ENCODE measurements at regions of chr12 and their contacts with region 1.

Region 1: GRCh38 chr12:56688129-56688845 is at the start of gene PTGES3:
- DNase-seq: peak; percentile 92
- ATAC-seq: peak; percentile 75
- H3K4me3 ChIP-seq: peak within 1 kb of the TSS; percentile 90
- H3K27ac ChIP-seq: peak within 1 kb of the TSS; percentile 99
- H3K4me1 ChIP-seq: no peaks in the 10 kb centered on the region
- H3K27me3 ChIP-seq: no peaks in the 10 kb centered on the region
- CTCF ChIP-seq: no peak
- EP300 ChIP-seq: peak in 1 of 2 experiments; percentile 47; a peak in 2 of 4 replicates
- POLR2A ChIP-seq: peak; percentile 93
- RAD21 ChIP-seq: no peak
- polyA plus RNA-seq, gene PTGES3: 117 to 186 TPM

Region 2: GRCh38 chr12:56630160-56630632 is 58.1 kb before region 1 on chr12 and contains the start of gene BAZ2A:
- CTCF ChIA-PET with region 1: interaction called, 58 read pairs
- POLR2A ChIA-PET with region 1: interaction called, 155 read pairs
- RAD21 ChIA-PET with region 1: interaction called, 176 read pairs
- SMC1A ChIA-PET with region 1: interaction called, 28 read pairs
- in situ Hi-C with region 1: no loop called
- intact Hi-C with region 1: loop called (anchors 2 kb)
- DNase-seq: no peak
- ATAC-seq: peak; percentile 79
- H3K4me3 ChIP-seq: peak within 1 kb of the TSS; percentile 100
- H3K27ac ChIP-seq: peak within 1 kb of the TSS; percentile 90
- H3K4me1 ChIP-seq: peaks cover 47% of the 10 kb centered on the region
- H3K27me3 ChIP-seq: no peaks in the 10 kb centered on the region
- CTCF ChIP-seq: no peak
- EP300 ChIP-seq: peak in 1 of 2 experiments; percentile 40; a peak in 2 of 4 replicates
- POLR2A ChIP-seq: peak; percentile 74
- RAD21 ChIP-seq: no peak
- polyA plus RNA-seq, gene BAZ2A: 4.8 to 14.6 TPM

Region 3: DNA sequence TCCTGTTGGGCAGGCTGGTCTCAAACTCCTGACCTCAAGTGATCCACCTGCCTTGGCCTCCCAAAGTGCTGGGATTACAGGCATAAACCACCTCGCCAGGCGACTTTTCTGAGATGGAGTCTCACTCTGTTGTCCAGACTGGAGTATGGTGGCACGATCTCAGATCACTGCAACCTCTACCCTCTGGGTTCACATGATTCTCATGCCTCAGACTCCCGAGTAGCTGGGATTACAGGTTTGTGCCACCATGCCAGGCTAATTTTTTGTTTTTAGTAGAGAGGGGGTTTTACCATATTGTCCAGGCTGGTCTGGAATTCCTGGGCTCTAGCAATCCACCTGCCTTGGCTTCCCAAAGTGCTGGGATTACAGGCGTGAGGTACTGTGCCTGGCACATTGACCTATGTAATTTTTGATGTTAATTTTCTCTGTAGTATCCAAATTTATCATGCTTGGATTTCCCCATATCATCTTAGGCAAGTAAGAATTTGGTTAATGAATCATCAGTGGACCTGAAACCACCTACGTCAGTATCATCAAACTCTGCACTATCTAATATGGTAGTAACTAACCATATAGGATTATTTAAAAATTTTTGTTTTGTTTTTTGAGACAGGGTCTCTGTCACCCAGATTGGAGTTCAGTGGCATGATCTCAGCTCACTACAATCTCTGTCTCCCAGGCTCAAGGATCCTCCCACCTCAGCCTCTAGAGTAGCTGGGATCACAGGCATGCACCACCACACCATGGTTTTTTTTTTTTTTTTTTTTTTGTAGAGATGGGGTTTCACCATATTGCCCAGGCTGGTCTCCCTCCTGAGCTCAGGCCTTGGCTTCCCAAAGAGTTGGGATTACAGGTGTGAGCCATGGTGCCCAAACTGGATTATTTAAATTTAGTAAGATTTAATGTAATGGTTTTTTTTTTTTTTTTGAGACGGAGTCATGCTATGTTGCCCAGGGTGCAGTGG is 30.6 kb before region 1 on chr12:
- CTCF ChIA-PET with region 1: interaction called, 6 read pairs
- POLR2A ChIA-PET with region 1: interaction called, 51 read pairs
- RAD21 ChIA-PET with region 1: interaction called, 21 read pairs
- SMC1A ChIA-PET with region 1: interaction called, 22 read pairs
- in situ Hi-C with region 1: no loop called
- intact Hi-C with region 1: no loop called
- DNase-seq: no peak
- ATAC-seq: peak; percentile 78
- H3K4me3 ChIP-seq: no peak overlapping the region
- H3K27ac ChIP-seq: peak overlapping the region; percentile 69
- H3K4me1 ChIP-seq: peaks cover 15% of the 10 kb centered on the region
- H3K27me3 ChIP-seq: no peaks in the 10 kb centered on the region
- CTCF ChIP-seq: no peak
- EP300 ChIP-seq: no peak
- POLR2A ChIP-seq: no peak
- RAD21 ChIP-seq: no peak

Region 4: DNA sequence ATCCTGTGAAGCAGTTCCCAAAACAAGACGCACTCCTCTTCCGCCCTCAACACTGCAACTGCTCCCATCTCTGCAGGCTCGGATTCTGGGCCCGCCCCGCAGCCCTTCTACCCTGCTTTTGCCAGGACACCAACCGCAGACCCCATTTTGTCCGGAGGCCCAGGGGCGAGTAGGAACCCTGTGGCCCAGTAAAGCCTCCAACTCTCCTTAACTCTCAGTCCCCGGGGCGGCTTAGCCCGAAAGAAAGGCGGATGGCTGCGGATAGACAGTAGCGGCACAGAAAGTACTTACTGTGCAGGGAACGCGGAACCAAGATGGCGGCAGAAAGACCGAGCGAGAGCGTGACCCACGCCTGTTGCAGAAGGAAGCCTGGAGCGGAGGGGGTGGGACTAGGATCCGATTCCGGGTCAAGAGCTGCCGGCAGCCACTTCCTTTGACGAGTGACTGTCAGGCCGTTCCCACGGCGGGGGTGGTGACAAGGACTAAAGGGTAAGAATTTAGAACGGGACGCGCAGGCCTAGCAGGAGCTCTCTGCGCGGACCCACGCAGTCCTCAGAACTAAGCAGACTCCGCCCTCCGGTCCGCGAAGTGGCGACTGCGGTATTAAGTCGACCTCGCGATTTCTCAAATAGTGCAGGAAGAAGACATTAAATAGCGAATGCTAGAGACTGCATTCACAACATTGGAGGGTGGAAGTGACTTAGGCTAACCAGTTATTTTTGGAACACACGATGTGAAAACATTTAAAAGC is 36.9 kb after region 1 on chr12 and contains the start of gene NACA:
- CTCF ChIA-PET with region 1: interaction called, 3 read pairs
- POLR2A ChIA-PET with region 1: interaction called, 26 read pairs
- RAD21 ChIA-PET with region 1: interaction called, 19 read pairs
- SMC1A ChIA-PET with region 1: interaction called, 11 read pairs
- in situ Hi-C with region 1: no loop called
- intact Hi-C with region 1: loop called (anchors 1 kb)
- DNase-seq: peak; percentile 91
- ATAC-seq: peak; percentile 95
- H3K4me3 ChIP-seq: peak within 1 kb of the TSS; percentile 97
- H3K27ac ChIP-seq: peak within 1 kb of the TSS; percentile 93
- H3K4me1 ChIP-seq: peaks cover 28% of the 10 kb centered on the region
- H3K27me3 ChIP-seq: no peaks in the 10 kb centered on the region
- CTCF ChIP-seq: no peak
- EP300 ChIP-seq: no peak
- POLR2A ChIP-seq: peak; percentile 100
- RAD21 ChIP-seq: no peak
- polyA plus RNA-seq, gene NACA: 2,263 to 2,782 TPM

Region 5: DNA sequence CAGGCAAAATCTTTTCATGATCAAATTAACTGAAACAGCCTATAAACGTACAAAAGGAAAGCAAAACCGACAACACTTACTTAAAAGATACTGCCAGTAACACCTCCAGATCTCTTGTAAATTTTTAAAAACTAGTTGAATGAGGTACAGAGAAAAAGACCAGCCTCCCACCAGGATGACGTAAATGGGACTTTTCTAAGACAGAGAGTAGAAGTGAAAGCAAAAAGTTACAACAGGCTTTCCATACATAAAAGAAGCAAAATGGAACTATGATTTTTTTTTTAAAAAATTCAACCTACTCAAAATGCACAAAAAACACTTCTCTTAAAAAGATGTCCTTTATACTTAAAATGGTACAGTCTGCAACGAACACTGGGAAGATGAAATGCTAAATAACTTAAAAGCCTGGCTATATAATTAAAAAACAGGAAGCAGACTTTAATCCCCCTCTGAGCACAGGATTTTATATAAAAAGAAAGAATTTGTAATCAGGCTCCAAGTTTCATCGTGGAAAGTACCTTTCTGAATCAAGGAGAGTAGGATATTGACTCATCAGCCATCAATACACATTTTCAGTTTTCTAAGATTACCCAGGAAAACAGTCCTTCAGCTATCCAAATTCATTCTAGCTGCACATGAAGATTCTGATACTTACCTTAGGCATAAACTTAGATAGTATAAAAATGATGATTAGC is 375.9 kb after region 1 on chr12:
- CTCF ChIA-PET with region 1: no interaction called
- POLR2A ChIA-PET with region 1: no interaction called
- RAD21 ChIA-PET with region 1: no interaction called
- SMC1A ChIA-PET with region 1: no interaction called
- in situ Hi-C with region 1: no loop called
- intact Hi-C with region 1: loop called (anchors 5 kb)
- DNase-seq: peak; percentile 69
- ATAC-seq: peak; percentile 96
- H3K4me3 ChIP-seq: peak overlapping the region; percentile 48; the same call in 1 of the 2 replicates
- H3K27ac ChIP-seq: peak overlapping the region; percentile 59
- H3K4me1 ChIP-seq: peaks cover 10% of the 10 kb centered on the region
- H3K27me3 ChIP-seq: no peaks in the 10 kb centered on the region
- CTCF ChIP-seq: no peak
- EP300 ChIP-seq: no peak
- POLR2A ChIP-seq: no peak
- RAD21 ChIP-seq: no peak